Tibial artery (tissue), 4 donors: ENCODE measurements at regions of chr1 and their contacts with region 1.

Region 1: DNA sequence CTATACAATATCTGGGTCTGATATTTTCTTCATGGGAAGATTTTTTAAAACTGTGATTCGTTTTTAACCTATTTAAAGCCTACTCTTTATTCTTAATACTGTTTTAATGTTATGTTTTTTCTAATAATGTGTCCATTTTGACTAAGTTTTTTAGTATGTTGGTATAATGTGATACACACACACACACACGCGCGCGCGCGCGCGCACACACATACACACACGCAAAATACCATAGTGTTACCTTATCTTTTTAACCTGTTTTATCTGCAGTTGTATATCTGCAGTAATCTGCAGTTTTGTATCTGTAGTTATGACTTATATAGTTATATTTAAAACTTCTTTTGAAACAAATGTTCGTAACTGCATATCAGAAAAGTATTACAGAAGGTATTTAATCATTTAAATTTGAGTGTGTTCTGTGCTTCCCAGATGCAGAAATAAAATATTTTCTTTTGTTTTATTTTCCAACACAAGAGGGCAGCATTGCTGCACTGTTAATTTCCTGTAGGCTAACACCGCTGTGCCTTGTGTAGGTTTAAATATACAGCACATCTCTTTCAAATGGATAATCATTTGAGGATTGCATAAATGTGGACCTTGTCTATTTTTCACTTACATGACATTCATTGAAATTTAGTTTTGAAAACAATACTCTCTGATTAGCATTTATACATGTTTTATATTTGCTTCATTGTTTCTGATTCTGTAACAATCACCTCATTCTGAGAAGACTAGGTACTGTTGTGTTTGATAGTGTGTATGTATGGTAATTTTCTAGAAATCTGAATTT is 166.1 kb downstream of the PDE4B start:
- DNase-seq: no peak
- H3K4me3 ChIP-seq: no peak overlapping the region
- H3K27ac ChIP-seq: no peak overlapping the region
- H3K4me1 ChIP-seq: peaks cover 0 to 8% (median 0%) of the 10 kb centered on the region in 4 donors
- H3K27me3 ChIP-seq: no peaks in the 10 kb centered on the region
- CTCF ChIP-seq: peak; percentile 71 to 77

Region 2: DNA sequence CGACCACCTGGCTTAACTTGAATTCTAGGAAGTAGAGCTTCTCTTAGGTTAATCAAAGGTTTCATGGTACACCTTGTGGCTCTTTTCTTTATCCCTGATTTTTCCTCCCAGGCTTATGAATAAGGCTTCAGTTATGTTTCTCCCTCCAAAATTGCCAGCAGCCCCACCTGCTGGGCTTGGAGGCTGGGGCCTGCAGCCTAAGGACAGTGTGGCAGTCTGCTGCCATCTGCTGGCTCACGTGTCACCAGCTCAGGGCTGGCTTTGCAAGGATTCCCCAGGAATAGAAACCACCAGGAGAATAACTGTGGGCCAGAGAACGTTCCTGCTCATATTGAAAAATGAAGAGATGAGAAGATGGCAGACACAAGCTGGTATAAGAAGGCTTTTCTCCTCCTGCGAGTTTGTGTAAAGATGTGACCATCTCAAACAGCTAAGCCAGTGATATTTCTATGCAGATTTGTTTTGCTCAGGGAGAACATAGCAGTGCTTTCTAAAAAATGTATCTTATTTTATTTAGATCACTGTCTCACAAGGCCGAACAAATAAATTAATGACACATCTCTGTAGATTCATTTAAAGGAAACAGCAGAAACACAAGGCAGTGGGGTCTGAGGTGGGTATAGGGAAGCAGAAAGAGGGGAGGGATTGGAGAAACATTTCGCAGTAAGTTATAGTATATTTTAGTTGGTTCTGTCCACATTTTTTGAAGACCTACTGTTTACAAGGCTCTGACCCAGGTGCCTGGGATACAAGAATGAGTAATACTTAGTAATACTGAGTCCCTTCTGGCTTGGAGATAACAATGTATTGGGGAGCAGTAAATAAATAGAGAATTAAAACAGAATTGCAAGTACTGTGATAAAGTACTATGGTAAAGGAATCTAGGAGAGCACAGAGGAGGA is 284.1 kb after region 1 on chr1:
- intact Hi-C with region 1: loop called (anchors 5 kb)
- DNase-seq: peak; percentile 84 to 88
- H3K4me3 ChIP-seq: no peak overlapping the region
- H3K27ac ChIP-seq: no peak overlapping the region
- H3K4me1 ChIP-seq: peaks cover 0 to 4% (median 4%) of the 10 kb centered on the region in 4 donors
- H3K27me3 ChIP-seq: peaks cover 0 to 6% of the 10 kb centered on the region in 2 donors
- CTCF ChIP-seq: peak; percentile 96

Region 3: GRCh38 chr1:66452162-66452561 is 493.4 kb after region 1 on chr1:
- intact Hi-C with region 1: loop called (anchors 5 kb)
- DNase-seq: no peak
- H3K4me3 ChIP-seq: no peak overlapping the region
- H3K27ac ChIP-seq: no peak overlapping the region
- H3K4me1 ChIP-seq: peaks cover 0 to 38% (median 14%) of the 10 kb centered on the region in 4 donors
- H3K27me3 ChIP-seq: no peaks in the 10 kb centered on the region
- CTCF ChIP-seq: no peak

Region 4: DNA sequence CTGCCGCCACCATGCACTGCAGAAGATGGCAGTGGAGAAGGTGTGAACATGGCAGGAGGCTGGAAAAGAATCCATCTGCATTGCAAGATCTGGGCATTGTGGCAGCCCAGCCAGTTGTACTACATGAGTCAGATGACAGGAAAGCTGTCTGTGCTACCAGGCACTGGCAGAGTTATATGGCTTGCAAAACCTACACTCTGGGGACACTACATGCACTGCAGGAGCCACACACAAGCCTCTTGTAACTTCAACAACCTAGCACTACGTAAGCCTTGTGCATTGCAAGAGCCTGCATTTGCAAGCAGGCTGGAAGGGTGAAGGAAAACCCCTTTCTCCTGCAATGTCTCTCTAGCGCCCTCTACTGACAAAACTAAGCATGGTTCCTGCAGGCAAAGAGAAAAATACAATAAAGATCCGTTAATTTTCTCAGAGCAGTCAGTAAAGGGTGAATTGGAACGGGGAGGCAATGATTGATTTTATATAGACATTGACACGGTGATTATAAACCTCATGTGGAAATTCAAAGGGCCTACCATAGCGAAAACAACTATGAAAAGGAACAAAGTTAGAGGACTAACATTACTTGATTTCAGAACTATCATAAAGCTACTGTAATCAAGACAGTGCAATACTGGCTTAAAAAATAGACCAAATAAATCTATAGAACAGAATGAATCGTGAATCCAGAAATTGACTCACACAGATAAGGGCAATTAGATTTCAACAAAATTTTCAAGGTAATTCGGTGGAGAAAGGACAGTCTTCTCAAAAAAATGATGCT is 767.3 kb after region 1 on chr1:
- intact Hi-C with region 1: loop called (anchors 10 kb)
- DNase-seq: peak; percentile 69 to 83
- H3K4me3 ChIP-seq: no peak overlapping the region
- H3K27ac ChIP-seq: peak overlapping the region; percentile 36 to 38
- H3K4me1 ChIP-seq: peaks cover 0 to 12% (median 9%) of the 10 kb centered on the region in 4 donors
- H3K27me3 ChIP-seq: no peaks in the 10 kb centered on the region
- CTCF ChIP-seq: peak; percentile 87 to 99